ENCODE measurements at regions of chr10 and their contacts with region 1.

Region 1: DNA sequence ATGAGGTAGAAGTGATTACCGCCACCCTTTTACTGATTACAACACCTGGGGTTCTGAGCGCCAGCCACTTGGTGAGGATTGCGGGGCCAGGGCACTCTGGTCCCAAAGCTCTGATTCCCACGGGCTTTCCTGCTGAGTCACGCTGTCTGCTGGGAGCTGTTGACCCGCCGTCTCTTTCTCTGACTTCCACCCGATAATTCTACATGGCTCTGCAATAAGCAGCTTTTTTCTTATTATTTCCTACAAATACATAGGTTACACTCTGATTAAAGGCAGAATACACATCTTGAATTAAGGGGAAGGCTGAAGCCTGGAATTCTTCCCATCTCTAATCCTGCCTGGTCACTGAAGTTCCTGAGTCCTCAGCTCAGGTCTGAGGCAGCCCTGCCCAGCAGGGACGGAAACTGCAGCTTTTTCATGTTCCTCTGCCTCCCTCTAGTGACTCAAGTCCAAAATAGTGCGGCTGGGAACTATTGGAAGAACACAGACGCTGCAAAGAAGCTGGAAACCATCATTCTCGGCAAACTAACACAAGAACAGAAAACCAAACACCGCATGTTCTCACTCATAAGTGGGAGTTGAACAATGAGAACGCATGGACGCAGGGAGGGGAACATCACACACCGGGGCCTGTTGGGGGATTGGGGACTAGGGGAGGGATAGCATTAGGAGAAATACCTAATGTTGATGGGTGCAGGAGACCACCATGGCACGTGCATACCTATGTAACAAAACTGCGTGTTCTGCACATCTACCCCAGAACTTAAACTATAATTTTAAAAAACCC is 178.3 kb downstream of the PRKCQ start:
- DNase-seq: peak; percentile 43 to 90 (median 80)
- H3K4me3 ChIP-seq: peak overlapping the region; percentile 5 to 70 (median 49)
- H3K27ac ChIP-seq: peak overlapping the region in 56 of 59 donors; percentile 11 to 85 (median 73)
- H3K27me3 ChIP-seq: no peaks in the 10 kb centered on the region
- CTCF ChIP-seq: peak; percentile 44 to 91 (median 83)

Region 2: DNA sequence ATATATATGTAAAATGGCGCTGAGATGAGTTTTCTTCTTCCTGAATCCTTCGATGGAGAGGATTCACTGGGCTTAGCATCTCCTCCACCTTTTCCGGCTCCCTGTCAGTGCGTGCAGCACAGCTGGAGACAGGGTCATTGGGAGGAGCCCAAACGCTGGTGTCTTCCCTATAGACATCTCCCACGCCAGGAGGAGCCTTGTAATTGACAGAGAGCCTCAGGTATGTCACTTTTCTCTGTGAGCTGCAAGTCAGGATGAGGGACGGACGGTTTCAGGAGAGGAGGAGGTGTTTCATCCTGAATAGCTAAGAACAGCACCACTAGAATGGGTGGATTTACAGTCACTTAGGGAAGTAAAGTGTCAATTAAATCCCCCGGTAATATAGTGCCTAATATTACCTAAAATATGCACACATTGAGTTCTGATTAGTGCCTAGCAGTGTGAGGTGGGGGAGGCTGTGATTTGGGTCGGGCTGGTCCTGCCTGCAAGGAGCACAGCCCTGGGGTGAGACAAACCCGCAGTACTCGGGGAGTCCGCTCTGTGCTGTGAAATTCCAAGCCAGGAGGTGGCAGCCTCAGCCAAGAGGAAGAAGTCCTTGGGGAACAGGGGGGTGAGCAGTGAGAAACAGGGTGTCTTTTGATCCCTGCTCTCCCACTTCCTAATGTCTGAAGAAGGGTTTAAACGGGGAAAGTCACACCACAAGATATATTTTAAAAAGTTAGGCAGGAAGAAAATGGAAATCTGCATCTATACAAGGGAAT is 452.6 kb before region 1 on chr10:
- intact Hi-C with region 1: loop called (anchors 5 to 10 kb)
- DNase-seq: peak in 9 of 10 donors; percentile 17 to 84 (median 74)
- H3K4me3 ChIP-seq: no peak overlapping the region
- H3K27ac ChIP-seq: no peak overlapping the region
- H3K27me3 ChIP-seq: no peaks in the 10 kb centered on the region
- CTCF ChIP-seq: peak in 54 of 56 donors; percentile 32 to 73 (median 56)

Region 3: DNA sequence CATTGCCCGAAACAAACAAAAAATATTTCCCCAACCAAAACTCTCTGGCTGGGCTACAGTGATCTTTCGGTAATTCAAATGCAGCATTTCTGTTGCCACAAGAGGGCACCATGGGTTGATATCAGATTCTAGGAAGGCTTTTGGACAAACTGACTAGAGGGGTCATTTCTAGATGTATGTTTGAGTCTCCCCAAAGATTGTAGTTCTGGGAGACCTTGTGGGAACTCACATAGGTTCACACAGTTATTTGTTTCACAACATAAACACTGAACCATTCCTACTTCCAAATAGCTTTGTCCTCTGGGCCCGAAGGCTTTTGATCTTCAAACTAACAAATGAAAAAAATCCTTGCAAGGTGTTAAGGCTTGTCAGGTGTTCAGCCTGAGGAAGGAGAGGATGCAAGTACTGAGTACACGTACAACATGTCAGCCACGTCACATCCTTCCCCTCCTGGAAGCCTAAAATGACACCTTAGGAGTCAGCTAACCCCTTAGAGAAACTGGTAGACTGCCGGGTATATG is 387.5 kb before region 1 on chr10:
- intact Hi-C with region 1: loop called (anchors 2 to 10 kb)
- DNase-seq: peak in 3 of 10 donors; percentile 11 to 68 (median 50)
- H3K4me3 ChIP-seq: peak overlapping the region in 1 of 59 donors; percentile 5
- H3K27ac ChIP-seq: peak overlapping the region in 1 of 59 donors; percentile 18
- H3K27me3 ChIP-seq: no peaks in the 10 kb centered on the region
- CTCF ChIP-seq: peak; percentile 64 to 87 (median 77)

Region 4: DNA sequence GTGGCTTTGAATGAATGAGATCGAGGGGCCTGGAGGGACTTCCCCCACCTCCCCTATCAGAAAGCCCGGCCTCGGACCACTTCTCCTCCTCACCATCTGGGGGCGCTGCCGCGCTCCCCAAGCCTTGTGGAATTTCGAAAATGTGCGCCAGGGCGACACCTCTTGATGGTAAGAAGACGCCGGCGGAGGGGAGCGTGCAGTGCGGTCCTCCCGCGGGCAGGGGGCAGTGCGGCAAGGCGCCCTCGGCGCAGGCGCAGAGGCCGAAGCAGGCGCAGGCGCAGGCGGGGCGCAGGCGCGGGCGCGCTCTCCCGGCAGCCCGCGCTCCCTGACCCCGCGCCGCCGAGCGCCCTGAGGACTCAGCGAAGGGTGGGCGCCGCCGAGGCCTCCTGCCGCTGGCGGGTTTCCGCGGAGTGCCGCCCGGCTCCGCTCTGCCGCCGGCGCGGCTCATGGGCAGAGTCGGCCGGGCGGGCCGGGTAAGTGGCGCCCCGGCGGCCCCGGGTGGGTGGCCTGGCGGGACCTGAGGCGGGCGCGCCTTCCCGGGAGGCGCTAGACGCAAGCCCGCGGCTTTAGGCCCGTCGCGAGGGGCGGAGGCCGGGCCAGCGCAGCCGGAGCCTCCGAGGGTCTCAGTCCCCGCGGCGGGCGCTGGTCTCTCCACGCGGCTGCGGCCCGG is 312.9 kb before region 1 on chr10 and contains the start of gene RBM17:
- intact Hi-C with region 1: loop called (anchors 5 kb)
- DNase-seq: peak; percentile 76 to 96 (median 92)
- H3K4me3 ChIP-seq: peak within 1 kb of the TSS; percentile 71 to 100 (median 91)
- H3K27ac ChIP-seq: peak within 1 kb of the TSS in 55 of 59 donors; percentile 22 to 96 (median 79)
- H3K27me3 ChIP-seq: no peaks in the 10 kb centered on the region
- CTCF ChIP-seq: peak; percentile 93 to 100 (median 100)
- total RNA-seq, gene RBM17: 67.3 to 155 (median 95.4) TPM

Region 5: DNA sequence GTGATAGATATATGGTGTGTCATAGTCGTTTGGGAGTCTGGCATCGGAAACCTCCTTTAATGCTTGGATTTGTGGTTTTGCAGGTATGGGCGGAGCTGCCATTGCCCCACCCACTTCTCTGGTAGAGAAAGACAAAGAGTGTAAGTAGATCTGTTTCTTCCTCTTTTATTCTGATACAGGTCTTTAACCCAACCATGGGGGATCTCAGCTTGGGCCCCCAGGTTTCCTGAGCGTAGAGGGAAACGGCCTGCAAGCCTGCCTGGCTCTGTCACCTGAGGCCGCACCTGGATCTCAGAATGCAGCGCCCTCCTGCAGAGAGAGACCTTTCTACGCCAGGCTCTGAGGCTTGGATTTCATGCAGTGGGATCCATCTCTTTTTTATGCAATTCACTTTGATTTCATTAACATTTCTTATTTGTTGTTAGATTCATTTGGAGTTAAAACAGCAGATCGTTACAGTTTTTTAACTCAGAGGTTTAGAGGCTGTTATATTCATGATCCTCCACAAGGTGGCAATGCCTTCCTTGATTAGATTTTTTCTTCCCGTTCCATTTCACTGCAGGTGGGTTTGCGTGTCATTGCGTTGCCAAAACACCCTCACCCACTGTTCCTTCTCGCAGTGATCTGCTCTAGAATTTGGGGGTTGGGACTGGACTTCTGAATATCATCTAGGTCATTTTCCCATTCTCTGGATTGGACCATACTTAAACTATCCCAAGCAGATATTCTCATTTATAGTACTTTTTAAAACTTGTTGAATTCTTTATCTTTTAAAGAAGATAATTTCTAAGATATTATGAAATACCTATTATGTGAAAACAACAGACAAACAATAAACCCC is 292.9 kb before region 1 on chr10:
- intact Hi-C with region 1: loop called (anchors 1 to 2 kb)
- DNase-seq: no peak
- H3K4me3 ChIP-seq: no peak overlapping the region
- H3K27ac ChIP-seq: peak overlapping the region in 27 of 59 donors; percentile 1 to 76 (median 36)
- H3K27me3 ChIP-seq: no peaks in the 10 kb centered on the region
- CTCF ChIP-seq: peak; percentile 68 to 92 (median 85)

Region 6: GRCh38 chr10:6151087-6151977 is 250.4 kb before region 1 on chr10:
- intact Hi-C with region 1: loop called in 1 of 2 experiments (anchors 5 kb)
- DNase-seq: peak in 9 of 10 donors; percentile 22 to 81 (median 73)
- H3K4me3 ChIP-seq: peak overlapping the region in 48 of 59 donors; percentile 3 to 53 (median 32)
- H3K27ac ChIP-seq: peak overlapping the region in 56 of 59 donors; percentile 3 to 82 (median 62)
- H3K27me3 ChIP-seq: no peaks in the 10 kb centered on the region
- CTCF ChIP-seq: peak in 55 of 56 donors; percentile 14 to 83 (median 71)

Measured in dorsolateral prefrontal cortex (tissue), 120 donors.